Posterior cingulate gyrus (tissue), 11 donors: ENCODE measurements at regions of chr3 and their contacts with region 1.

Region 1: DNA sequence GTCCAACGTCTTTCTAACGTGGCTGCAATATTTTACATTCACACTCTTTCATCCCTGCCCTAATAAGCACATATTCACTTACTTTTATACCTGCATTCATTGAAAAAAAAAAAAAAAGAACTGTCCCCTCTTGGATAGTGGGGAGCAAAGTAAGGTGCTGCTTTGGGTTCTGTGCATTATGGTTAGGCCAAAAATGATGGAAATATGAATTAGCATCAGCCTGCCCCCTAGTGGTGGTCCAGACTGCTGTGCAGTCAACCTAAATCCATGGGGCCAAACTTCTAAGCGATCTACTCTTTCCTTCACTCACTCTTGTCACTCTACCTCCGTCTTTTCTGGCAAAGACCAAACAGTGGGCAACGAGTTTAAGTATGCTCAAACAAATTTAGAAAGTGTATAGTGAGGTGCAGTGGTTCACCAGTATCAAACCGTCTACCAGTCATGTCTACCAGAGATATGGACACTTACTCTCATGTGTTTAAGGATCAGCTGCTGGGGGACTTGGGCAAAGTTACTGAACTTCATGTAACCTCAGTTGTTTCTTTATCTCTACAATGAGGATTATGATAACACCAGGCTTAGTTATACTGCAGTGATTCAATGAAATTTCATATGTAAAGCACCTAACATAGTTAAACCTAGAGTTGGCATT is 61.5 kb upstream of the GRM7 start:
- DNase-seq: peak in 4 of 10 donors; percentile 17 to 52 (median 28)

Region 2: GRCh38 chr3:5304789-5305683 is 1494.4 kb before region 1 on chr3:
- intact Hi-C with region 1: loop called (anchors 10 kb)
- DNase-seq: peak in 8 of 10 donors; percentile 31 to 91 (median 53)

Region 3: GRCh38 chr3:5426094-5426883 is 1373.1 kb before region 1 on chr3:
- intact Hi-C with region 1: loop called (anchors 5 kb)
- DNase-seq: peak; percentile 67 to 95 (median 86)

Region 4: DNA sequence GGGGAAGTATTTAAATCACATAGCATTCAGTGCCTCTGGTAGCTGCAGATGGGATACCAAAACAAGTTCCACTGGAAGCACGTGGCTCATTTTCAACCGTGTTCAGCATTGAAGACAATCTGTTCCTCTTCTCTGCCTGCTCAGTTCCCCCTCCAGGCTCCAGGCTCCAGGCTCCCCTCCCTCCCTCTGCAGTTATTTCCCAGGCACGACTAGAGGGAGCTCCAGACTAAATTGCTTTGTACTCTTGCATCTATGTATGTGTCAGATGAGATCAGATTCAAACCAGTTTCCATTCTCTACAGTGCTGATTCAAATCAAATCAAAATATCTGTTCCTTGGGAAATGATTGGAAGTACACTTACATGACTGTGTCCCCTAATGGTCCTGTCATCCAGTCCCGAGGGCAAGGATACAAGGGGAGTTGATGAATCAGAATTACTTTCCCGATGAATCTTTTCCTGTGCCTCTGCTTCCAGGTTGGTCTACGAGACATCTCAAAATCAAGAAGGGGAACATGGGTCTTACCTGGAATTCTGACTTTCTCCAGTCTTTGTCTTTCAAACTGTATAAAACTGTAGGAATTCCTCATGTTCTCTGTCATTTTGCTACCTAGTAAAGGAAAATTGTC is 1011.4 kb before region 1 on chr3:
- intact Hi-C with region 1: loop called (anchors 10 kb)
- DNase-seq: peak; percentile 31 to 94 (median 64)

Region 5: DNA sequence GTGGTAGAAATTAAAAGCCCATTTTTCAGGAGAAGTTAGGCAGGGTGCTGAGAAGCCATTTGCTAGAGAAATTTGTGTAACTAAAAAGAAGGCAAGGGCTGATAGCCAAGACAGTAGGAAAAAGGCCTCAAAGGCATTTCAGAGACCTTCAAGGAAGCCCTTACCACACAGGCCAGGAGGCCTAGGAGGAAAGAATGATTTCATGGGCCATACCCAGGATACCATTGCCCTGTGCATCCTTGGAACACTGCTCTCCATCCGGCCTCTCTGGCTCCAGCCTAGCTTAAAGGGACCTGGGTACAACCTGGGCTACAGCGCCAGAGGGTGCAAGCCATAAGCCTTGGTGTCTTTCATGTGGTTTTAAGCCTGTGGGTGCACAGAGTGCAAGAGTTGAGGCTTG is 132.0 kb before region 1 on chr3:
- intact Hi-C with region 1: no loop called
- DNase-seq: no peak

Region 6: GRCh38 chr3:6697722-6698121 is 101.7 kb before region 1 on chr3:
- intact Hi-C with region 1: no loop called
- DNase-seq: no peak